ENCODE measurements at regions of chrX and their contacts with region 1.

Region 1: GRCh38 chrX:130110379-130111219 is at the start of gene ELF4:
- DNase-seq: peak; percentile 43 to 79 (median 48)
- H3K4me3 ChIP-seq: peak within 1 kb of the TSS; percentile 57 to 76
- H3K4me3 Mint-ChIP-seq: peak within 1 kb of the TSS; percentile 89 to 94 (median 92)
- H3K27ac ChIP-seq: peak within 1 kb of the TSS; percentile 70
- H3K27ac Mint-ChIP-seq: peak within 1 kb of the TSS; percentile 75 to 93 (median 91)
- H3K4me1 ChIP-seq: peaks cover 31% of the 10 kb centered on the region
- H3K4me1 Mint-ChIP-seq: peaks cover 14 to 43% (median 28%) of the 10 kb centered on the region in 4 donors
- H3K27me3 ChIP-seq: no peaks in the 10 kb centered on the region
- H3K27me3 Mint-ChIP-seq: no peaks in the 10 kb centered on the region
- total RNA-seq, gene ELF4: 29.8 to 31.3 TPM

Region 2: GRCh38 chrX:130024127-130024526 is 86.5 kb before region 1 on chrX:
- CTCF ChIA-PET with region 1: no interaction called
- POLR2A ChIA-PET with region 1: no interaction called
- intact Hi-C with region 1: no loop called
- DNase-seq: peak; percentile 81 to 87 (median 83)
- H3K4me3 ChIP-seq: no peak overlapping the region
- H3K4me3 Mint-ChIP-seq: peak overlapping the region in 6 of 8 donors; percentile 22 to 72 (median 58)
- H3K27ac ChIP-seq: no peak overlapping the region
- H3K27ac Mint-ChIP-seq: peak overlapping the region; percentile 75 to 91 (median 82)
- H3K4me1 ChIP-seq: peaks cover 12% of the 10 kb centered on the region
- H3K4me1 Mint-ChIP-seq: peaks cover 8 to 16% (median 12%) of the 10 kb centered on the region in 4 donors
- H3K27me3 ChIP-seq: no peaks in the 10 kb centered on the region
- H3K27me3 Mint-ChIP-seq: no peaks in the 10 kb centered on the region

Region 3: DNA sequence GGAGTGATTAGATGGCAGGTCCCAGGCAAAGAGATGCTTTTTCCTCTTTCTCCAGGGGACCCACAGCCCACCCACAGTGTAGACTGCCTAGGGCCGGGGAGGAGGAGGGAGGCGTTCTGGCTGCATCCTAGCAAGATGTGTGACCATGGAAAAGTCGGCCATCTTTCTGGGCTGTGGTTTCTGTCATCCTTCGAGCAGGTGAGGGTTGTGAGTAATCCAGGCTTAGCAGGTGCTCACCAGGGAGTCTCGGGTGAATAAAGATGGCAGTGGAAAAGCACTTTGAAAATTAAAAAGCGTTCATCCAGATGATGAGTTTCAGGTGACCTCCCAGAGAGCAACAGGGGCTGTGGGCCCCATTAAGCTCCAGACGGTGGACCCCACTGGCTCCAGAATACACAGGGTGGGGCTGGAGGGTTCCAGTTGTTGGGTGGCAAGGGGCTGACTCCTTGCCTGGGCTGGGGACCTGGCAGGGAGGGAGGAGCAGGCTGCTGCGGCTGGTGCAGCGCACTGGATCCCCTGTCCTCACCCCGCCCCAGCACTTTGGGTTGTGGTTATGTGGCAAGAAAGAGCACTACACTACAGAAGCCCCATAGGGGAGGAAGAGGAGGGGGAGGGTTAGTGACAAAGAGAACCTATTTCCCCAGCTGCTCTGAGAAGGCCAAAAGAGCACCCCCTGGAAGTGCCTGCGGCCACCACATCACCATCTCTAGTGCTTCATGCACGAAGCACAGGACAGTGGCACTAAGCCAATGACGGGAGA is 24.0 kb before region 1 on chrX:
- CTCF ChIA-PET with region 1: interaction called, 163 read pairs
- POLR2A ChIA-PET with region 1: interaction called, 36 read pairs
- intact Hi-C with region 1: loop called (anchors 2 kb)
- DNase-seq: peak; percentile 76 to 84 (median 78)
- H3K4me3 ChIP-seq: peak overlapping the region; percentile 72 to 78
- H3K4me3 Mint-ChIP-seq: peak overlapping the region; percentile 88 to 94 (median 92)
- H3K27ac ChIP-seq: peak overlapping the region; percentile 70
- H3K27ac Mint-ChIP-seq: peak overlapping the region; percentile 89 to 94 (median 93)
- H3K4me1 ChIP-seq: peaks cover 76% of the 10 kb centered on the region
- H3K4me1 Mint-ChIP-seq: peaks cover 24 to 90% (median 70%) of the 10 kb centered on the region in 4 donors
- H3K27me3 ChIP-seq: no peaks in the 10 kb centered on the region
- H3K27me3 Mint-ChIP-seq: no peaks in the 10 kb centered on the region

Region 4: GRCh38 chrX:130091958-130092522 is 18.6 kb before region 1 on chrX:
- CTCF ChIA-PET with region 1: interaction called, 118 read pairs
- POLR2A ChIA-PET with region 1: interaction called, 57 read pairs
- intact Hi-C with region 1: loop called (anchors 1 kb)
- DNase-seq: peak; percentile 85 to 96 (median 91)
- H3K4me3 ChIP-seq: peak overlapping the region in 1 of 2 donors; percentile 49
- H3K4me3 Mint-ChIP-seq: peak overlapping the region; percentile 87 to 96 (median 90)
- H3K27ac ChIP-seq: peak overlapping the region; percentile 69
- H3K27ac Mint-ChIP-seq: peak overlapping the region; percentile 93 to 99 (median 96)
- H3K4me1 ChIP-seq: peaks cover 79% of the 10 kb centered on the region
- H3K4me1 Mint-ChIP-seq: peaks cover 33 to 82% (median 60%) of the 10 kb centered on the region in 4 donors
- H3K27me3 ChIP-seq: no peaks in the 10 kb centered on the region
- H3K27me3 Mint-ChIP-seq: no peaks in the 10 kb centered on the region

Region 5: DNA sequence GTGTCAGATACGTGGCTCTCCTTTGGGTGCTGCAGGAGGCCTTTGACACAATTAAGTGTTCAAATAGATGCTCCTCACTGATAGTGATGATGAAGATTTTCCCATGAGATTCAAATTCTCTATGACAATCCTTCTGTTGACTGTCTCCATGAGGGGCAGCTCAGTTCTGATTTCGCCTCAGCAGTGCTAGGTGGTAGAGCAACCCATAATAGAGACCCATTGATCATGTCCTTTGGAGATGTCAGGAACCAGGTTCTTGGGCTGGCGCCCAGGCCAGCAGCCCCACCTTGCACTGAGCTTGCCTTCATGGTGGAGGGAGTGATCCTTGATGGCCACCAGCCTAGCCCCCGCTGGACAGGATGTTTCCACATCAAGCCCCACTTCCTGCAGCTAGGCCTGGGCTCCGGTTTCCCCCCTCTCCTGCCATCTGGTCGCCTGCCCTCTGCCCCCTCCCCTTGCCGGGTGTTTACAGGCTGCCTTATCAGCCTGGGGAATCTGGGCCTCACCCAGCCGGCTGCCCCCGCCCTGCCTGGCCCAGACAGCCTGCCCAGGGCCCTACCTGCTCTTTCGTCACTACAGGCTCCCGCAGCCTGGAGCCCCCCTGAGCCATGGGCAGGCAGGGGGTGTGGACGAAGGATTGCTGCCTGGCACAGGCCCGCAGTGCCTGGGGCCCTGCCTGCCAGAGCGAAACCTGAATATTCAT is 12.9 kb before region 1 on chrX:
- CTCF ChIA-PET with region 1: interaction called, 118 read pairs
- POLR2A ChIA-PET with region 1: interaction called, 57 read pairs
- intact Hi-C with region 1: loop called (anchors 1 kb)
- DNase-seq: peak; percentile 45 to 75 (median 47)
- H3K4me3 ChIP-seq: no peak overlapping the region
- H3K4me3 Mint-ChIP-seq: peak overlapping the region in 7 of 8 donors; percentile 59 to 77 (median 73)
- H3K27ac ChIP-seq: peak overlapping the region; percentile 40
- H3K27ac Mint-ChIP-seq: peak overlapping the region; percentile 83 to 94 (median 91)
- H3K4me1 ChIP-seq: peaks cover 92% of the 10 kb centered on the region
- H3K4me1 Mint-ChIP-seq: peaks cover 39 to 80% (median 60%) of the 10 kb centered on the region in 4 donors
- H3K27me3 ChIP-seq: no peaks in the 10 kb centered on the region
- H3K27me3 Mint-ChIP-seq: no peaks in the 10 kb centered on the region